Right cardiac atrium (tissue), 5 donors: ENCODE measurements at regions of chr12 and their contacts with region 1.

Region 1: GRCh38 chr12:4276524-4277204 is 3.1 kb downstream of the CCND2 start:
- DNase-seq: peak; percentile 87 to 90 (median 90)
- ATAC-seq: peak; percentile 51 to 53
- H3K4me3 ChIP-seq: peak overlapping the region; percentile 88
- H3K27ac ChIP-seq: peak overlapping the region; percentile 51
- H3K4me1 ChIP-seq: peaks cover 13% of the 10 kb centered on the region
- H3K27me3 ChIP-seq: no peaks in the 10 kb centered on the region

Region 2: GRCh38 chr12:3896801-3897331 is 379.8 kb before region 1 on chr12:
- intact Hi-C with region 1: loop called in 2 of 4 experiments (anchors 5 to 10 kb)
- DNase-seq: no peak
- ATAC-seq: peak; percentile 45 to 77
- H3K4me3 ChIP-seq: no peak overlapping the region
- H3K27ac ChIP-seq: no peak overlapping the region
- H3K4me1 ChIP-seq: no peaks in the 10 kb centered on the region
- H3K27me3 ChIP-seq: no peaks in the 10 kb centered on the region

Region 3: DNA sequence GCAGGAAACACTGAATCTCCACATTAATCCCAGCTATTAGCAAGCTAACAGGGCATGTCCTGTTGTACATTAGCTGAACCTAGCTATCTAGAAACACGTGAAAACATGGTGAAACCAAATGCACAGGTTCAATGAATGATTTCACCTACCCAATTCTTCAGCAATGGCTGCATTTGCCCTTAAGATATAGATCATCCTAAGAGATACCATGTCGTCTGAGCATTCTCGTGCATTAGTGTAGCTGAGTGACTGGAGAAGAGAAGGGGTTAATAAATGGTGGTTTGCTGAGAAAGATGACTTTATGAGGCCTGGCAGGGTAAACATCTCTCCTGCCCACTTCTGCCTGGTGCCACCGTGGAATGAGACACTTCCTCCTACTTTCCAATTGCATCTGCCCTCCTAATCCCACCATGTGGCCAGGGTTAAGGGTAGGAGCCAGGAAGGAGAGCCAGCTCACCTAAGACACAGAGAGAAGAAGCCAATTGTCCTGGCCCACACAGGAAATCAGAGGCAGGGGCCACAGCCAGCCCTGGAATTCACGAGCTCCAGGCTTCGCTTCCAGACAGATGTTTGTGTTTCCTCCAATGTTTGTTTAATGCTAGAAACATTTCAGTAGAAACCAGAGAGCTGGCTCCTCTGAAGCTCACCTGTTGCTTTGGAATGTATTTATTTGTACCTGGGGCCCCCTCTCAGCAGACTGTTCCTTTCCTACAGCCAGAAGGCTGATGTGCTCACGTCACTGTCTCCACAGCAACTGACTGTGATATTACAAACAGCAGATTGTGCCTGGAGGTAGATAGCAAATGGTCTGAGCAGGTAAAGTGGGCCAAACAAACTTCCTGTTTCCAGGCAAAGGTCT is 277.5 kb before region 1 on chr12:
- intact Hi-C with region 1: loop called (anchors 5 to 10 kb)
- DNase-seq: no peak
- ATAC-seq: no peak
- H3K4me3 ChIP-seq: no peak overlapping the region
- H3K27ac ChIP-seq: no peak overlapping the region
- H3K4me1 ChIP-seq: no peaks in the 10 kb centered on the region
- H3K27me3 ChIP-seq: no peaks in the 10 kb centered on the region

Region 4: GRCh38 chr12:4107436-4107878 is 169.2 kb before region 1 on chr12:
- intact Hi-C with region 1: loop called (anchors 2 to 10 kb)
- DNase-seq: no peak
- ATAC-seq: peak; percentile 68 to 72
- H3K4me3 ChIP-seq: no peak overlapping the region
- H3K27ac ChIP-seq: no peak overlapping the region
- H3K4me1 ChIP-seq: no peaks in the 10 kb centered on the region
- H3K27me3 ChIP-seq: no peaks in the 10 kb centered on the region

Region 5: DNA sequence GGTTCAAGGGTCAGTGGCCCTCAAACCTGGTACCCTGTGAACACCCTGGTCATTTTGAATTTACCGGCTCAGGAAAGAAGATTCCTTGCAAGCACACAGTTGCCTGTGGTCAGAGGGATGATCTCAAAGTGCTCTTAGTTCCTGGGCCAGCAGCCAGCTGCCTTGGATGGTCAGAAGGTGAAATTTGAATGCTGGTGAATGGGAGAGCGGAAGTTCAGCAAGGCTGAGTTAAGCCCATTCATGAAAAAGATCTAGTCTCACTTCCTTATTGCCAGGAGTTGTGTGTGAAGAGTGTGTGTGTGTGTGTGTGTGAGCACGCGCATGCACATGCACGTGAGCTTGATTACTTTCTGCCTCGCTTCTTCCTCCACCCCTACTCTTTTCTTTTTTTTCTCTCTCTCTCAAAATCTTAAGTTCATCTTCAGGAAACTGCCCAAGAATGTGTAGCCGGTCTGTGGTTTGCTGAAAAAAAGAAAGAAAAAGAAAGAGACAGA is 158.6 kb before region 1 on chr12:
- intact Hi-C with region 1: loop called in 2 of 4 experiments (anchors 5 to 10 kb)
- DNase-seq: peak; percentile 21 to 78 (median 73)
- ATAC-seq: peak; percentile 59 to 62
- H3K4me3 ChIP-seq: no peak overlapping the region
- H3K27ac ChIP-seq: no peak overlapping the region
- H3K4me1 ChIP-seq: peaks cover 9% of the 10 kb centered on the region
- H3K27me3 ChIP-seq: no peaks in the 10 kb centered on the region